A549 (cell line): ENCODE measurements at regions of chr15 and their contacts with region 1.

Region 1: GRCh38 chr15:99213187-99213811 is 36.1 kb downstream of the TTC23 start:
- DNase-seq: peak; percentile 72 to 75
- ATAC-seq: peak; percentile 92 to 96; a peak in 5 of 6 replicates
- H3K4me3 ChIP-seq: no peak overlapping the region
- H3K27ac ChIP-seq: no peak overlapping the region
- H3K4me1 ChIP-seq: peaks cover 16% of the 10 kb centered on the region
- CTCF ChIP-seq: peak; percentile 99
- EP300 ChIP-seq: no peak
- POLR2A ChIP-seq: no peak
- RAD21 ChIP-seq: peak; percentile 98

Region 2: DNA sequence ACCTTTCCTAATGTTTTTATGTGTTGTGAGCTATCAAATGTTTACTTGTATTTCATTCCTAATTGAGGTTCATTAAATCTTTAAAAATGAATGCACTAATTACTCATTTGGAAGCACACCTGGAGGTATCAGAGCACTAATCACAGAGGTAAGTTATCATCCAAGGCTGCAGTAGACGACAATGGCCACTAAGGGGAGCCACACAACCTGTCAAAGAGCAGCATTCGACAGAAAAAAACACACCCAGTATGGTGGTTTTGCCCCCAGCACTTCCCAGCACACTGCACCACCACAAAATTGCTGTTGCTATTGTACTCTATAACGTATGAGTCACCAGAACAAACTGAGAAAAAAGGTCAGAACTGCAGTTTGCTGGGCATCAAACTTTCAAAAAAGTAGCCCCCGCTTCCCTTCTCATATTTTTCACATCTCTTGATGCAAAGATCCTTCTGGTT is 770.9 kb before region 1 on chr15:
- CTCF ChIA-PET with region 1: interaction called, 18 read pairs
- POLR2A ChIA-PET with region 1: no interaction called
- DNase-seq: peak; percentile 80 to 86
- ATAC-seq: peak; percentile 57 to 86
- H3K4me3 ChIP-seq: no peak overlapping the region
- H3K27ac ChIP-seq: no peak overlapping the region
- H3K4me1 ChIP-seq: peaks cover 8% of the 10 kb centered on the region
- CTCF ChIP-seq: peak; percentile 97
- EP300 ChIP-seq: no peak
- POLR2A ChIP-seq: no peak
- RAD21 ChIP-seq: peak; percentile 97 to 98

Region 3: GRCh38 chr15:99110581-99111320 is 102.5 kb before region 1 on chr15:
- CTCF ChIA-PET with region 1: interaction called, 372 read pairs
- POLR2A ChIA-PET with region 1: no interaction called
- DNase-seq: no peak
- ATAC-seq: no peak
- H3K4me3 ChIP-seq: no peak overlapping the region
- H3K27ac ChIP-seq: no peak overlapping the region
- H3K4me1 ChIP-seq: peaks cover 20% of the 10 kb centered on the region
- CTCF ChIP-seq: no peak
- EP300 ChIP-seq: no peak
- POLR2A ChIP-seq: no peak
- RAD21 ChIP-seq: no peak

Region 4: DNA sequence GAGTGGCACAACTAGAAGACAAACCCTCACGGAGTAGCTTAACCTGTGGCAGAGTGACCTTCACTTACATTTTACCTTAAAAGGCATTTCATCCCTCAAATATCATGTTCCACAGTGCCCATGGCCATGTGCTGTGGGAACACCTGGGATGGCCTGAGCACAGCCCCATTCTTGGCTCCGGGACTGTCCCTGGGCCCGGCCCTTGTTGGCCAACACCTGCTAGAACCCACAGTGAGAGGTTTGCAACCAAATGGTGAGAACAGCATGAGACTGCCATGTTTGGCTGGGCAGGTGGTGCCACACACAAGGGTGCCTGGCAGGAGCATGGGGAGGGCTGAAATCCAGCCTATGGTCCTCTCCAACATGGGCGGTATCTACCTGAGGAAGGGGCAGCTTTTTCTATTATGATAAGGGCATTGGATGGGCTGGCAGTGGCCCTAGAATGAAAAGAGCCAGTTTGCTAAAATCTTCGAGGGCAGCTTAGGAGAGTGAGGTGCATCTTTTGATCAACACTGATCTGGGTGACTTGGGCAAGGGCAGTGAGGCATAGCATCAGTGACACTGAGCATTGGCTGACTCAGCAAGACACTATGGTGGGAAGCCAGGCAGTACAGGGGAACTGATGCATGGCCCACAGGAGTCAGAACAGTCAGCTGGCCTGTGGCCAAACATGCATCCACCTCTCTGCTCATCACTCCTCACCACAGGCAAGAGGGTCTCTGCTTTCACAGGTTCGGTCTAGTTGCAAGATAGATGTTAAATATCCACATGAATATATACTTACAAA is 54.5 kb before region 1 on chr15:
- CTCF ChIA-PET with region 1: interaction called, 10 read pairs
- POLR2A ChIA-PET with region 1: no interaction called
- DNase-seq: no peak
- ATAC-seq: no peak
- H3K4me3 ChIP-seq: no peak overlapping the region
- H3K27ac ChIP-seq: no peak overlapping the region
- H3K4me1 ChIP-seq: no peaks in the 10 kb centered on the region
- CTCF ChIP-seq: no peak
- EP300 ChIP-seq: no peak
- POLR2A ChIP-seq: no peak
- RAD21 ChIP-seq: no peak

Region 5: GRCh38 chr15:99197856-99198255 is 15.4 kb before region 1 on chr15:
- CTCF ChIA-PET with region 1: interaction called, 27 read pairs
- POLR2A ChIA-PET with region 1: no interaction called
- DNase-seq: no peak
- ATAC-seq: no peak
- H3K4me3 ChIP-seq: no peak overlapping the region
- H3K27ac ChIP-seq: no peak overlapping the region
- H3K4me1 ChIP-seq: no peaks in the 10 kb centered on the region
- CTCF ChIP-seq: no peak
- EP300 ChIP-seq: no peak
- POLR2A ChIP-seq: no peak
- RAD21 ChIP-seq: no peak